Right cardiac atrium (tissue), 5 donors: ENCODE measurements at regions of chr21 and their contacts with region 1.

Region 1: GRCh38 chr21:23601549-23601948 is 2005.7 kb downstream of the MRPL39 start:
- DNase-seq: no peak
- ATAC-seq: no peak
- H3K4me3 ChIP-seq: no peak overlapping the region
- H3K27ac ChIP-seq: no peak overlapping the region
- H3K4me1 ChIP-seq: no peaks in the 10 kb centered on the region
- H3K27me3 ChIP-seq: no peaks in the 10 kb centered on the region

Region 2: GRCh38 chr21:23152130-23152529 is 449.4 kb before region 1 on chr21:
- intact Hi-C with region 1: no loop called
- DNase-seq: no peak
- ATAC-seq: no peak
- H3K4me3 ChIP-seq: no peak overlapping the region
- H3K27ac ChIP-seq: no peak overlapping the region
- H3K4me1 ChIP-seq: no peaks in the 10 kb centered on the region
- H3K27me3 ChIP-seq: no peaks in the 10 kb centered on the region

Region 3: DNA sequence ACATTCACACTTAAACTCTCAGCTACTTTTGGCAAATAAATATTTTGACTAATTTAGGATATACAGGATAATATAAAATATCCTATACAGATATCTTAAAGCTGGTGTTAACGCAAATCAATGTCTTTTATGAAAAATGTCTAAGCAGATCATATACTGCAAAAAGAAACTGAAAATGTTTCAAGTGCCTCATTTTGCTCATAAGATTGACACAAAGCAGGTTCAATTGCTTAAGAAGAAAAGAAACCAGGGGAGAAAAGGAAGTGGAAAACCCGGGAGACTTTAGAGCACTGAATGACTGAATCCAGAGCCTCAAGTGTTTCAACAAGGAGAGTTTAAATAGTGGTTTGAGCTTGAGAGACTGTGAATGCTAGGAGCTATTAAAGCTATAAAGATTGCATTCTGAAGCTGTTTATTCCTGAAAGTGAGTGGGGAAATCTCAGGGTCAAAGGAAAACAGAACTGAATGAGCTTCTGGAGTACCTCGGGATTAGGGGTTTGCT is 62.7 kb after region 1 on chr21:
- intact Hi-C with region 1: loop called in 1 of 4 experiments (anchors 10 kb)
- DNase-seq: no peak
- ATAC-seq: no peak
- H3K4me3 ChIP-seq: no peak overlapping the region
- H3K27ac ChIP-seq: no peak overlapping the region
- H3K4me1 ChIP-seq: no peaks in the 10 kb centered on the region
- H3K27me3 ChIP-seq: no peaks in the 10 kb centered on the region